AG04449 (cell line): ENCODE measurements at regions of chr10 and their contacts with region 1.

Region 1: DNA sequence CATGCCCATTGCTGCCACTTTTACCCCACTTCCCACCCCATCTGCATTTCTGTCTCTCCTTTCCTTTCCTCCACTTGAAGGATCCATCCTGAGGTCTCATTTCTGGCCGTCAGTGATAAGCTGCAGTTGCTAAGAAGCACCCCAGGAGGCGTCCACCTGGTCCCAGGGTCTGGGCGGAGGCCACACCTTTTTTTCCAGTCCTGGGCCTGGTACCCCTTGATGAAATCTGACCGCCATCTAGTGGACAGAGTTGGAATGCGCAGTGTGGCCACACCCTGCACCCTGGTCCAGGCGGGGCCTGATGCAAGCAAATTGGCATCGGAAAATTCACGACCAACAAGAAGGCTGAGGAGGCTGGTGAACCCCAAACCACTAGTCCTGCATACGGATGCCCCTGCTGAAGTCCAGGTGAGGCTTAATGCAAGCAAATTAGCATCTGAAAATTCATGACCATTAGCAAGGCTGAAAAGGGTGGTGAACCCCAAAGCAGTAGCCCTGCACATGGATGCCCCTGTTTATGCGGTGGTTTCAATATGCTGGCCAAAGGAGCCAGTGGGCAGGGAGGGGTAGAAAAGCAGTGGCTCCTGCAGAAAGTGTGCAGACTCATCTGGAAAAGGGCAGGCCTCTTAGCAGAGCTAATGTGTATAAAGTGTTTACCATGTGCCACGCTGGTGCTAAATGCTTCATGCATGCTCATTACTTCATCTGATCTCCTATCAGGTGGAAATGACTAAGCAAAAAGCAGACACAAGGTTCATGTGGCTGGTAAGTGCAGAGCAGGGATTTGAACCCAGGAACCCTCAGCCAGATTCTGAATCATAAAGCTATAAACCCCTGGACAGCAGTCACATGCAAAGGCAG is 43.2 kb downstream of the GPAM start:
- DNase-seq: no peak
- H3K4me3 ChIP-seq: no peak overlapping the region
- CTCF ChIP-seq: peak; percentile 87

Region 2: DNA sequence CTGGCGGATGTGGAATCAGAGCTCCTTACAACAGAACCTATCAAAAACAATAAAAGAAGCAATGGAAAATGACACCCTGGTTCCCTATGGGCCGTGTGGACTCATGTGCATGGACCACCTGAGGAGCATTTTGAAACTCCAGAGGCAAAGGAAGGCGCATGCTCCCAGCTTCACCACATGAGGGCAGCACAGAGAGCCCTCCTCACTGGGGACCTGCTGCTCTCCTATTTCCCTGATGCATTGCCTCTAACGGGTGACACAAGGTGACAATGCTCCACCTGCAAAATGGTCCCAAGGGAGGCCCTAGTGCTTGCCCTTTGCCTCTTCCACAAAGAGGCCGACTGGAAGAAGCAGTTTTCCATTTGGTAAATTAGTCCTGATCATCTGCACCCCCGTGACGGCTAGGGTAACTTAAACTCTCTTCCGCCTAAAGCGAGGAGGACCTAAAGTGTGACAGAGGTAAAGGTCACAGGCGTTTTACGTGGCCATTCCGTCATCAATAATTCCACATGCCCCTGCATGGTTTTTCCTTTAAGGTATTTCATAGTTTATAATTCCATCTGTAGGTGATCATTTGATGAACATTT is 24.4 kb before region 1 on chr10:
- CTCF ChIA-PET with region 1: interaction called, 266 read pairs
- POLR2A ChIA-PET with region 1: no interaction called
- DNase-seq: no peak
- H3K4me3 ChIP-seq: no peak overlapping the region
- CTCF ChIP-seq: peak; percentile 88

Region 3: GRCh38 chr10:112160834-112161233 is 20.5 kb after region 1 on chr10:
- CTCF ChIA-PET with region 1: interaction called, 14 read pairs
- POLR2A ChIA-PET with region 1: no interaction called
- DNase-seq: no peak
- H3K4me3 ChIP-seq: no peak overlapping the region
- CTCF ChIP-seq: no peak

Region 4: GRCh38 chr10:112183329-112184051 is 43.1 kb after region 1 on chr10 and contains the start of gene GPAM:
- CTCF ChIA-PET with region 1: interaction called, 28 read pairs
- POLR2A ChIA-PET with region 1: interaction called, 3 read pairs
- DNase-seq: peak; percentile 41
- H3K4me3 ChIP-seq: peak within 1 kb of the TSS; percentile 96
- CTCF ChIP-seq: no peak

Region 5: GRCh38 chr10:112314822-112315474 is 174.6 kb after region 1 on chr10:
- CTCF ChIA-PET with region 1: interaction called, 271 read pairs
- POLR2A ChIA-PET with region 1: no interaction called
- DNase-seq: no peak
- H3K4me3 ChIP-seq: no peak overlapping the region
- CTCF ChIP-seq: peak; percentile 90